Heart right ventricle (tissue), 16 donors: ENCODE measurements at regions of chr2 and their contacts with region 1.

Region 1: DNA sequence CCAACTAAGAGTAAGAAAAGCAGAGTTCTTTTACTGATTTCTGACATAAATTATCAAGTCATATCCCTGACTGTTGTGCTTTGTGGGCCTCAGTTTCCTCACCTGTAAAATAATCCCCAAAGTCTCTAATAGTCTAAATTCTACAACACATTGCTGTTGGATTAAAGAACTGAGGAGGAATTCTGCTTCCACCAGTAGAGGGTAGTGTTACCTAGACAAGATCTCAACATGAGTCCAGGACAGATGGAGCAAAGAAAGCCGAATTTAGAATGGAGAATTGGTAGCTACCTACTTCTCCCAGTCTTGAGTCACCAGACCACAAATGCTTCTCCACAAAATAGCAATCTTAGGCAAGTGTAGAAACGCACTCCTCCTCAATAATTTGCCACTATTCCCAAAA is 462.5 kb upstream of the FSHR start:
- DNase-seq: no peak
- ATAC-seq: peak in 1 of 8 donors; percentile 51
- H3K4me3 ChIP-seq: no peak overlapping the region
- H3K27ac ChIP-seq: no peak overlapping the region
- H3K4me1 ChIP-seq: no peaks in the 10 kb centered on the region
- H3K27me3 ChIP-seq: no peaks in the 10 kb centered on the region
- CTCF ChIP-seq: peak in 7 of 9 donors; percentile 34 to 56 (median 48)

Region 2: DNA sequence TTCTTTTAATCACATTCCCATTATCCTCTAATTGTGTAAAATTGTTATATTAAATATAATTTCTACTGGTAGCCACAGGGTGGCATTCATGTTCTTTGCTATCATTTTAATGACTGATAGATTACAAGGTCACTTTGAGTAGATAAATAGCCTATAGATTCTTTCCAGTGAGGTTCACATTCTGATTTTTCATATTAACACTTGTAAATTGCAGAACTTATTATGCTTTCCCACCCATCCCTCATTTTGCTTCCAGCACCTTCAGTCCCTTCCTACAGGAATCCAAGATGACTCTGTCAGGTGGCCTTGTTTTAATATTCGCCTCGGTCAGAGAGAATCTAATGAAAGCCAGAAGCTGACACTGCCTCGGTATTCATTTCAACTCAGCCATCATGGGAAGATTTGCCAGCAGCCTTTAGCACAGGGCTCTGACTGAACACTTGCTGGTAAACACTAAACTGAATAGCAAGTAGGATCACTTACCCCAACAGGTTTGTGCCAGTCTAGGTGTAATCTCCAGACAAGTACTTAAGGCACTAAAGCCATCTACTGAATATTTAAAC is 361.3 kb before region 1 on chr2:
- intact Hi-C with region 1: loop called in 1 of 10 experiments (anchors 10 kb)
- DNase-seq: no peak
- ATAC-seq: no peak
- H3K4me3 ChIP-seq: no peak overlapping the region
- H3K27ac ChIP-seq: no peak overlapping the region
- H3K4me1 ChIP-seq: no peaks in the 10 kb centered on the region
- H3K27me3 ChIP-seq: no peaks in the 10 kb centered on the region
- CTCF ChIP-seq: peak in 8 of 9 donors; percentile 18 to 60 (median 34)

Region 3: DNA sequence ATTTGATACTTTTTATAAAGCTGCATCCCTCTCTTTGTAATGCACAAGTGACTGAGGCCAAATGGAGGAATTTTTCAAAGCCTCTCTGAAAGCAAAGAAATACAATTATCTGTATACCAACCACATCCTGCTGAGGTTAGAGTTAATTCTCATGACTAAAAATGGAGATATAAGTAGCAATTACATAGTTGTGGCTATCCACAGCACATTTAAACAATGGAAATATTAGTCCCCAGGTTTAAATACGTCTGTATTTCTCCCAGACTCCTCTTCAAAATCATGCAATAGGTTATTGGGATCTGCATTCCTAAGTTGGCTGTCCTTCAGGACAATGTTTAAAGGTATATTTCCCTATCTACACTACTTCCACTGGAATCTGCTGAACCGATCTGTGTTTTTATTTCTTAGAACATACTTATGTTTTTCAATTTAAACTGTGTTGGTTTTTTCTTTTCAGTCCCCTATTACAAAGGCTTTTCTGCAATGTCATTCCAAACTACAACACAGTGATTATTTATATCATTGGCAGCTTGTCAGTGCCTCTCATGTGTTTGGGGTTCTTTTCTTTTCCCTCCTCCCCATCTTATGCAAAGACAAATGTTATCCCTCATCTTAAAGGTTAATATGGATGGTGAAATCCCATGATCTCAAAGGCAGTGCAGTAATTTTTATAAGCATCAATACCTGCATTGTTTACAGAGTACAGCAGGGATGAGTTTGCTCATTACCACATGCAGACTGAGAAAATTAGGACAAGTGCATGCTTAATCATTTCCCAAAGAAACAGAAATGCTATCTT is 327.7 kb before region 1 on chr2:
- intact Hi-C with region 1: no loop called
- DNase-seq: no peak
- ATAC-seq: peak in 2 of 8 donors; percentile 26 to 29
- H3K4me3 ChIP-seq: no peak overlapping the region
- H3K27ac ChIP-seq: peak overlapping the region in 5 of 10 donors; percentile 20 to 58 (median 28)
- H3K4me1 ChIP-seq: peaks cover 0 to 23% (median 10%) of the 10 kb centered on the region in 9 donors
- H3K27me3 ChIP-seq: no peaks in the 10 kb centered on the region
- CTCF ChIP-seq: no peak

Region 4: GRCh38 chr2:49367003-49367402 is 249.8 kb before region 1 on chr2:
- intact Hi-C with region 1: no loop called
- DNase-seq: no peak
- ATAC-seq: no peak
- H3K4me3 ChIP-seq: no peak overlapping the region
- H3K27ac ChIP-seq: no peak overlapping the region
- H3K4me1 ChIP-seq: no peaks in the 10 kb centered on the region
- H3K27me3 ChIP-seq: no peaks in the 10 kb centered on the region
- CTCF ChIP-seq: no peak

Region 5: GRCh38 chr2:49582946-49583345 is 33.9 kb before region 1 on chr2:
- intact Hi-C with region 1: no loop called
- DNase-seq: no peak
- ATAC-seq: no peak
- H3K4me3 ChIP-seq: no peak overlapping the region
- H3K27ac ChIP-seq: no peak overlapping the region
- H3K4me1 ChIP-seq: peaks cover 0 to 4% (median 0%) of the 10 kb centered on the region in 9 donors
- H3K27me3 ChIP-seq: no peaks in the 10 kb centered on the region
- CTCF ChIP-seq: no peak

Region 6: GRCh38 chr2:50143822-50144575 is 527.2 kb after region 1 on chr2:
- intact Hi-C with region 1: loop called in 4 of 10 experiments (anchors 5 to 10 kb)
- DNase-seq: peak in 1 of 2 donors; percentile 5
- ATAC-seq: peak; percentile 51 to 92 (median 74)
- H3K4me3 ChIP-seq: peak overlapping the region in 8 of 10 donors; percentile 7 to 47 (median 36)
- H3K27ac ChIP-seq: peak overlapping the region in 3 of 10 donors; percentile 10 to 51 (median 35)
- H3K4me1 ChIP-seq: peaks cover 0 to 7% (median 0%) of the 10 kb centered on the region in 9 donors
- H3K27me3 ChIP-seq: no peaks in the 10 kb centered on the region
- CTCF ChIP-seq: peak; percentile 12 to 74 (median 60)

Region 7: GRCh38 chr2:50395510-50396297 is 778.9 kb after region 1 on chr2:
- intact Hi-C with region 1: loop called in 5 of 10 experiments (anchors 5 to 10 kb)
- DNase-seq: no peak
- ATAC-seq: no peak
- H3K4me3 ChIP-seq: no peak overlapping the region
- H3K27ac ChIP-seq: no peak overlapping the region
- H3K4me1 ChIP-seq: peaks cover 0 to 4% (median 0%) of the 10 kb centered on the region in 9 donors
- H3K27me3 ChIP-seq: no peaks in the 10 kb centered on the region
- CTCF ChIP-seq: no peak